ENCODE measurements at regions of chr9 and their contacts with region 1.

Region 1: DNA sequence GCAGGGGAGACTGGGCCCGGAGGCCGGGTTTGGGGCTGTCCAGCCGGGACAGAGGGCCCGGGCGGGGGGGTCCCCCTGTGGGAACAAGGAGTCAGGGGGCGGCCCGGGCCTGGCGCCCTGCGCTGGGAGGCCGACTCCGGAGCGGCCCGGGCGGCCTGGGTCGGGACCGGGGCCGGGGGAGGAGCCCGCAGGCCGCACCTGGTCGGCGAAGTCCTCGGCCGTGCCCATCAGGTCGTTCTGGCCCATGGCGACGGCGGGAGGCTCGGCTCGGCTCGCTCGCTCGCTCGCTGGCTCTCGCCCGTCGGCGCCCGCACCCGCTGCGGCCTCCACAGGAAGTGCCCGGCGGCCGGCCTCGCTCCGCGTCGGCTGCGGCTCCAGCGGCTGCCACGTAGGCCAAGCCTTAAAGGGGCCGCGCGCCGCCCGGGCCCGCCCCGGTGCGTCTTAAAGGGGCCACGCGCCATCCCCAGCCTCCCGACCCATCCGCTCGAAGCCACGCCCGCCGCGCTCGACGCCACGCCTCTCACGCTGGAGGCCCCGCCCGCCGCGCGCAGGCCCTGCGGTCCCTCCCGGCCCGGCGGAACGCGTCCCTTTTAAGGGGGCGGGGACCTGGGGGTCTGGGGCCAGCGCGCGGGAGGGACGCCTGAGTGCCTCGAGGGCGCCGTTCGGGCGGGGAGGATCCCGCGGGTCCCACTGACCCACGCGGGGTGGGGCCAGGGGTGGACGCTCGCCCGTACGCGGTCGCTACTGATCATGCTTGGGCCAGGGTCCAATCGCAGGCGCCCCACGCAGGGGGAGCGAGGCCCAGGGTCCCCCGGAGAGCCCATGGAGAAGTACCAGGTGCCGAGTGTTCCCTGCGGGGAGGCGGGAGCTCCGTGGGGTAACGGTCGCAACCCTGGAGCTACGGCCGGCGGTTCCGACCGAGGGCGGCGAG is at the starts of genes STKLD1 and SURF4:
- DNase-seq: peak; percentile 95
- ATAC-seq: peak; percentile 97
- H3K4me3 ChIP-seq: peak within 1 kb of the TSS; percentile 39 to 78 (median 66)
- H3K4me3 Mint-ChIP-seq: peak within 1 kb of the TSS; percentile 94
- H3K27ac ChIP-seq: peak within 1 kb of the TSS; percentile 18 to 91
- H3K27ac Mint-ChIP-seq: peak within 1 kb of the TSS; percentile 84
- H3K4me1 ChIP-seq: peaks cover 25 to 40% of the 10 kb centered on the region in 2 donors
- H3K4me1 Mint-ChIP-seq: peaks cover 33% of the 10 kb centered on the region
- H3K27me3 ChIP-seq: no peaks in the 10 kb centered on the region
- H3K27me3 Mint-ChIP-seq: no peaks in the 10 kb centered on the region
- CTCF ChIP-seq: no peak
- total RNA-seq, gene STKLD1: 1.1 and 2.7 TPM in 2 replicates
- total RNA-seq, gene SURF4: 43.8 and 44.1 TPM in 2 replicates

Region 2: DNA sequence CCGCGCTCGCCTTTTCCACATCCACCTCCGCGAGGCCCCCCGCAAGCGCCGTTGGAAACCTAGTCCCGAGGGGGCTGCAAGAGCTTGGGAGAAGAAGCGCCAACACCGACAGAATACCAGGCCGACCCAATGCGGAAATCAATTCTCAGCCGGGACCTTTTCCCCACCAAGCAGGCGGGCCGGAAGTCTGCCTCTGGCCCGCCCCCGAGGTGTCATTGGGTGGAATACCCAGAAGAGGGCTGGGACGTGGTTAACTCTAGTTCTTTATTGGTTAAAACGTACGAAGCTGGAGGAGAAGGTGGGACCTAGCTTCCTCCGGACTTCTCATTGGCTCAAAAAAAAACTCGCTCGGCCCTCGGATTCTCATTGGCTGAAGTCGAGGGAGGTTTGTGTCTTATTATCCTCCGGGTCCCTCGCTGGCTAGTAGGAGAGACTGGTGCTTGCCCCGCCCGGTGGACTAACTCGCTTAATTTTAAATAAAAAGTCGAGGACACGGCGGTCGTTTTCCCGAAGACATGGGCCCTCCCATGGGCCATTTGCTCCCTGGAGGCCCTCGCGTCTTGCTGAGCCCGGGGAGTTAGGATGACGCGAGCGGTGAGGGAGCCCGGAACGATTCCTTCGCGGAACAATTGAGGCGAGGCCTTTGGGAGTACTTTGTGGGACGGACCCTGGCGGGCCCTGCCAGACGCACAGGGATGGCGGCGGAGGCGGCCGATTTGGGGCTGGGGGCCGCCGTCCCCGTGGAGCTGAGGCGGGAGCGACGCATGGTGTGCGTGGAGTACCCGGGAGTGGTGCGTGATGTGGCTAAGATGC is 345.5 kb before region 1 on chr9 and contains the start of gene GTF3C5:
- CTCF ChIA-PET with region 1: no interaction called
- POLR2A ChIA-PET with region 1: no interaction called
- intact Hi-C with region 1: loop called (anchors 1 kb)
- DNase-seq: peak; percentile 97
- ATAC-seq: peak; percentile 96
- H3K4me3 ChIP-seq: peak within 1 kb of the TSS; percentile 87 to 99 (median 95)
- H3K4me3 Mint-ChIP-seq: peak within 1 kb of the TSS; percentile 97
- H3K27ac ChIP-seq: peak within 1 kb of the TSS; percentile 87 to 96
- H3K27ac Mint-ChIP-seq: peak within 1 kb of the TSS; percentile 98
- H3K4me1 ChIP-seq: peaks cover 20 to 24% of the 10 kb centered on the region in 2 donors
- H3K4me1 Mint-ChIP-seq: peaks cover 46% of the 10 kb centered on the region
- H3K27me3 ChIP-seq: no peaks in the 10 kb centered on the region
- H3K27me3 Mint-ChIP-seq: no peaks in the 10 kb centered on the region
- CTCF ChIP-seq: no peak
- total RNA-seq, gene GTF3C5: 77.3 and 80.5 TPM in 2 replicates

Region 3: DNA sequence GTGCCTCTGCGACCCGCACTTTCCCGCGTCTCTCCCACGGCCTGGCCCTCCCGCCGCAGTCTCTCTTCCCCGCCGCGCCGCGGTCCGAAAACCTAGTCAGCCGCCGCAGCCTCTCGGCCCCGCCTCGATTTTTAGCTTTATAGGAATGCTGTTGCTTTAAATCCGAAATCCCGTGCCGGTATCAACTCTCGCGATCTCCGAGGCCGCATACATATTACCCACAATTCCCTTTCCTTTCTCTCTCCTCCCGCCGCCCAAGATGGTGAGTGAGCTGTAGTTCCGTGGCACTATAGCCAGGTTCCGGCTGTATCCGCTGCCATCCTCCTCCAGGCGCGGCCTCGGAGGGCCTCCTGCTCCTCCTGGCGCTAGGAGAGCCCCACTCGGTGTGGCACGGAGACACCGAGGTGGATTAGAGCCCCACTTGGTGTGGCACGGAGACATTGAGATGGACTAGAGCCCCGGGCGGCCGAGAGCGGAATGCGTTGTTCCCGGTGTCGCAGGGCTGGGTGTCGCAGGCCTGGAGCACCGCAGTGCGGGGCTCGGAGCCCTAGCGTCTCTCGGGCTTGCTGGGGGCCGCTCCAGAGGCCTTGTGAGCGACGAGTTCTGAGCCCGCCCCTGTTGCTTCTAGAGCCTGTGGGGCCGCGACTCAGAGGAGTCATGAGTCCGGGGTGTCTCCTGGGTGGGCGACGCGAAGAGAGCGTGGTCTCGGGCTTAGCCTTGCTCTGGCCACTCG is 27.8 kb before region 1 on chr9 and contains the starts of genes MED22 and RPL7A:
- CTCF ChIA-PET with region 1: interaction called, 3 read pairs
- POLR2A ChIA-PET with region 1: interaction called, 4 read pairs
- intact Hi-C with region 1: loop called (anchors 1 kb)
- DNase-seq: peak; percentile 97
- ATAC-seq: peak; percentile 83
- H3K4me3 ChIP-seq: peak within 1 kb of the TSS; percentile 86 to 96 (median 92)
- H3K4me3 Mint-ChIP-seq: peak within 1 kb of the TSS; percentile 97
- H3K27ac ChIP-seq: peak within 1 kb of the TSS; percentile 87 to 90
- H3K27ac Mint-ChIP-seq: peak within 1 kb of the TSS; percentile 95
- H3K4me1 ChIP-seq: peaks cover 21 to 25% of the 10 kb centered on the region in 2 donors
- H3K4me1 Mint-ChIP-seq: peaks cover 36% of the 10 kb centered on the region
- H3K27me3 ChIP-seq: no peaks in the 10 kb centered on the region
- H3K27me3 Mint-ChIP-seq: no peaks in the 10 kb centered on the region
- CTCF ChIP-seq: no peak
- total RNA-seq, gene MED22: 50.4 and 56.9 TPM in 2 replicates
- total RNA-seq, gene RPL7A: 2,342 and 2,407 TPM in 2 replicates

Region 4: DNA sequence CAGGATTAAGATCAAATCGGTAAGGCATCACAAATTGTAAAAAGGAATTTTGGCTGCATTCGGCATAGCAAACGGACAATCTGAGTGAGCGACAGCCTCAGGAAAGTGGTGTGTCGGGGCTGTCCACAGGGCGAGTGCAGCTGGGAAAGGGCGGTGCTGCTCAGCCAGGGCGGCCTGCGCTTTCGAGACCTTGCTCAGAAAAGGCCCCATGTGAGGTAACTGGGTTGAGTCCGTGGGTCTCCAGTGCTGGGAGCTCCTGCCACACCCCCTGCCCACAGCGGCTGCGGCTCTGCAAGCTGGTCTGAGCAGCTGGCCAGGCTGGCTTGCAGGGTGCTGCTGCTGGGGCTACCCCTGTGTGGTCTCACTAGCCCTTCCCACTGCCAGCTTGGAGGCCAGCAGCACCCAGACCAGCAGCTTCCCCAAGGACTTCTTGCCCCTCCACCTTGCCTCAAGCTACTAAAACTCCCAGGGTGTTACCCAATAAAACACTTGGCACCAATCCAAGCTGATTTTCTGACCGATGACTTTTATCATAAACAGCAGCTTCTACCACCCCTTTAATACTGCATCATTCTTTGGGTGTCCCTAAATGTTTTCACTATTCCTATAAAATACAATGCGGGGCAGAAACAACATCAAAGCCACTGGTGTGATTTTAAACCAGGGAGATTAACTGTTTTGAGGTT is 13.5 kb before region 1 on chr9:
- CTCF ChIA-PET with region 1: interaction called, 11 read pairs
- POLR2A ChIA-PET with region 1: interaction called, 11 read pairs
- intact Hi-C with region 1: no loop called
- DNase-seq: no peak
- ATAC-seq: no peak
- H3K4me3 ChIP-seq: no peak overlapping the region
- H3K4me3 Mint-ChIP-seq: no peak overlapping the region
- H3K27ac ChIP-seq: no peak overlapping the region
- H3K27ac Mint-ChIP-seq: no peak overlapping the region
- H3K4me1 ChIP-seq: peaks cover 2 to 7% of the 10 kb centered on the region in 2 donors
- H3K4me1 Mint-ChIP-seq: peaks cover 13% of the 10 kb centered on the region
- H3K27me3 ChIP-seq: no peaks in the 10 kb centered on the region
- H3K27me3 Mint-ChIP-seq: no peaks in the 10 kb centered on the region
- CTCF ChIP-seq: no peak

Region 5: DNA sequence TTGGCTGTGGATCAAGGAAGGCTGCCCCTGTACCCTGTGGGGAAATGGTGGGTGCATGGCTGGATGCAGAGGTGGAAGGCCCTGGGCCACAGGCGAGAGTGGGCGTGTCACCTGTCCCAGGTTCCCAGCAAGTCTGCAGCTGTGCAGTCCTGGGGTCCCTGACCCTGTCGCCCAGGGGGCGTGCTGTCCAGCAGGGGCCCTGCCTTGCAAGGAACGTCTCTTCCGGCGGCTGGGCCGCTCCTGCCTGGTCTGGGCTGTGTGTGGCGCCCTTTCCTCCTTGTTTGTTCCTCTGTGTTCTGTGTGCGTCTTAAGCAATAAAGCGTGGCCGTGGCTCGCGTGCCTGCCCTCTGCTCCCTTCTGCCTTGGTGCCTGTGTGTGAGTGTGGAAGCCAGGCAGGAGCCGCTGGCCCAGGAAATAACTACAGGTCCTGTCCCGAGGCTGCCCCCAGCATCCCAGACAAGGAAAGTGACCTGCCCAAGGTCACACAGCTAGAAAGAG is 94.5 kb after region 1 on chr9:
- CTCF ChIA-PET with region 1: no interaction called
- POLR2A ChIA-PET with region 1: no interaction called
- intact Hi-C with region 1: no loop called
- DNase-seq: no peak
- ATAC-seq: no peak
- H3K4me3 ChIP-seq: no peak overlapping the region
- H3K4me3 Mint-ChIP-seq: no peak overlapping the region
- H3K27ac ChIP-seq: no peak overlapping the region
- H3K27ac Mint-ChIP-seq: peak overlapping the region; percentile 71
- H3K4me1 ChIP-seq: peaks cover 9 to 23% of the 10 kb centered on the region in 2 donors
- H3K4me1 Mint-ChIP-seq: peaks cover 11% of the 10 kb centered on the region
- H3K27me3 ChIP-seq: no peaks in the 10 kb centered on the region
- H3K27me3 Mint-ChIP-seq: no peaks in the 10 kb centered on the region
- CTCF ChIP-seq: no peak

Region 6: GRCh38 chr9:134024828-134025605 is 649.0 kb after region 1 on chr9 and contains the start of gene BRD3OS:
- CTCF ChIA-PET with region 1: no interaction called
- POLR2A ChIA-PET with region 1: no interaction called
- intact Hi-C with region 1: loop called (anchors 1 kb)
- DNase-seq: peak; percentile 97
- ATAC-seq: peak; percentile 93
- H3K4me3 ChIP-seq: peak within 1 kb of the TSS; percentile 53 to 85 (median 76)
- H3K4me3 Mint-ChIP-seq: peak within 1 kb of the TSS; percentile 86
- H3K27ac ChIP-seq: peak within 1 kb of the TSS; percentile 34 to 69
- H3K27ac Mint-ChIP-seq: peak within 1 kb of the TSS; percentile 88
- H3K4me1 ChIP-seq: peaks cover 6 to 19% of the 10 kb centered on the region in 2 donors
- H3K4me1 Mint-ChIP-seq: peaks cover 11% of the 10 kb centered on the region
- H3K27me3 ChIP-seq: no peaks in the 10 kb centered on the region
- H3K27me3 Mint-ChIP-seq: no peaks in the 10 kb centered on the region
- CTCF ChIP-seq: no peak
- total RNA-seq, gene BRD3OS: 25.3 and 26.8 TPM in 2 replicates